AG04449 (cell line): ENCODE measurements at regions of chr4 and their contacts with region 1.

Region 1: GRCh38 chr4:1167247-1167949 is 5.0 kb downstream of the SPON2 start:
- DNase-seq: peak; percentile 21
- H3K4me3 ChIP-seq: peak overlapping the region; percentile 70
- CTCF ChIP-seq: peak; percentile 94

Region 2: DNA sequence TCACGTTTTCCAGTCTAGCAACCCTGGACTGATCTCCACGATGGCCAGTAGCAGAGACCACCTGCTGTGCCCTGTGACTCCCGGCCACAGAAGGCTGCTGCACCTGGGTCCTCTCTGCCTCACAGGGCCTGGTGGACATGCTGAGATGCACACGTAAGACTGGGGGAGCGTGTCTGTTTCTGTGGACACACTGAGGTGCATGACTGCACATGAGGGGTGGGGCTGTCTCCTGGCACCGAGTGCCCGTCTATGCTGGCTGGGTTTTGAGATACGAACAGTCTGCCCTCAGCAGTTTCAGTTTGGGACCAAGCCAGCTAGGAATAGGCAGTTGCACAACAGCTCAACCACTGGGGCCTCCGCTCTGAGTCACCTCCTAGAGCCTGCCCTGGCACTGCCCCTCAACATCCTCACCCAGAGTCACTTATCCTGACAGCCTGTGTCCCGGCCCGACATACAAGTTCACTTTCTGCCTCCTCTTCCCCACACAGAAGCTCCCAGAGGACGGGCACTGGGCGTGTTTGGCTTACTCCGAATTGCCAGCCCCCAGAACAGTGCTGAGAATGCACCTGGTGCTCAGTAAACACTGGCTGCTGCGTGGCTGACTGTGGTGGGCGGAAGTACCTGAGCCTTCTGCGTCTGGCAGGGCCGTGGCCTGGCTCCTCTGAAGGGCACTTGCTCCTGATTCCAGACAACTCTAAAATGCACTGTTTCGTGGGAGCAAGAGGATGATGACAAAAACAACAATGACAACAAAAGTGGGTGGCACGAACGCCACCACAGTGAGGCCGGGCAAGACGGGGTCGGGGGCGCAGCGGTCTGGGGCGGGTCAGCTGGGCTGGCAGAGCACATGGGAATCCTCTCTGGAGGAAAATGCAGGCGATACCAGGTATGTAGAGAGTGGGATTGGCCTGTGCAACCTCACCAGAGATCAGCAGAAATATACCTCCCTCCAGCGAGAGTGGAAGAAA is 84.9 kb before region 1 on chr4:
- CTCF ChIA-PET with region 1: no interaction called
- POLR2A ChIA-PET with region 1: no interaction called
- DNase-seq: no peak
- H3K4me3 ChIP-seq: no peak overlapping the region
- CTCF ChIP-seq: no peak

Region 3: DNA sequence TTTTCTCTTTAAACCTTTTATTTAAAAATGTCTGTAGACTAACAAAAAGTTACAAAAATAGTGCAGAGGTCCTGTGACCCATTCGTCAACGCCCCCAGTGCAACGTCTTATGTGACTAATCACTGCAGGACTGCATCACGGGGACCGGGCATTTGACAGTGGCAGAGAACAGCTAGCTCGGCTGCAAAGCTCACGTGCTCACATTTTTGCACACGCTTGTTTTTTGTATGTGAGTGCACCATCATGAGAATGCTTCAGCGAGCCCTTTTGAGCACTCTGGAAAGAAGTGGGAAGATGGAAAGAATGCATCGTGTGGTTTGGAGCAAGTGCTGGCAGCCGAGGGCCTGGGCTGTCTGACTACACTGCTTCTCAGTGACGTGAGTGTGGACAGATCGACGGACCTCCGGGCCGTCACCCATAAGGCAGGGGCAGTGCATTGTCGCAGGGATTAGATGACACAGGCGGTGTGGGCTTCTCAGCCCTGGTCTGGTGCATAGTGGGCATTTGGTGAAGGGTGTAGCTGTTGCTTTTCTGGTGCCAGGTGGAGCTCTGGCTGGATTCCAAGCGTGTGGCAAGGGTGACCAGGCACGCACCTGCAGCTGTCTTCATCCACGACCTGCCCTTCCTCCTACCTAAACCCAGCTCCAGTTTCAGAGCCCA is 12.7 kb before region 1 on chr4:
- CTCF ChIA-PET with region 1: interaction called, 27 read pairs
- POLR2A ChIA-PET with region 1: no interaction called
- DNase-seq: no peak
- H3K4me3 ChIP-seq: no peak overlapping the region
- CTCF ChIP-seq: no peak

Region 4: GRCh38 chr4:1183985-1184773 is 16.8 kb after region 1 on chr4:
- CTCF ChIA-PET with region 1: interaction called, 29 read pairs
- POLR2A ChIA-PET with region 1: no interaction called
- DNase-seq: no peak
- H3K4me3 ChIP-seq: no peak overlapping the region
- CTCF ChIP-seq: no peak

Region 5: DNA sequence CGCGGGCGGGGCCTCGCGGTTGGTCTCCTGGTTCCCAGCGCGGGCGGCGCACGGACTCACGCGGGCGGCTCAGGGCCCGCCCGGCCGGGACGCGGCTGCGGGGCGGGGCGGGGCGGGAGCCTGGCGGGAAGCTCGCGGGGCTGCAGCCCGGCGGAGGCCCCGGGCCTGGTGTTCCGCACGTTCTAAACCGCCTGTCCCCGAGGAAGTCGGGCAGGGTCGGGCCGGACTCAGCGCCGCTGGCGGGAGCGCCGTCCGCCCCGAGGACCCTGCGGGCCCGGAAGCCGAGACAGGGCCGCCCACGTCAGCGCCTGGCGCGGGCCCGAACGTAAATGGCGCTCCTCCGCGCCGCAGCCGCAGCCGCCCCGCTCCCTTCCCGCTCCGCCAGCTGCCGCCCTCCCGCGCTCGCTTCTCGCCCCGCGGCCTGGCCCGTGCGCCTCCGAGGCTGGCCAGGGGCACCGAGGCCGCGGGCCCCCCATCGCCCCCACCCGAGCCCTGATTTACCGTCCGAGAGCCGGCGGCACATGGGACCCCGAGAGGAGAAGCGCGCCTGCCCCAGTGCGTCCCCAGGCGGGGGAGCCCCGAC is 81.8 kb after region 1 on chr4:
- CTCF ChIA-PET with region 1: interaction called, 11 read pairs
- POLR2A ChIA-PET with region 1: no interaction called
- DNase-seq: no peak
- H3K4me3 ChIP-seq: peak overlapping the region; percentile 58
- CTCF ChIP-seq: no peak

Region 6: GRCh38 chr4:1289207-1290164 is 122.1 kb after region 1 on chr4 and contains the start of gene MAEA:
- CTCF ChIA-PET with region 1: interaction called, 18 read pairs
- POLR2A ChIA-PET with region 1: no interaction called
- DNase-seq: peak; percentile 63
- H3K4me3 ChIP-seq: peak within 1 kb of the TSS; percentile 79
- CTCF ChIP-seq: no peak

Region 7: DNA sequence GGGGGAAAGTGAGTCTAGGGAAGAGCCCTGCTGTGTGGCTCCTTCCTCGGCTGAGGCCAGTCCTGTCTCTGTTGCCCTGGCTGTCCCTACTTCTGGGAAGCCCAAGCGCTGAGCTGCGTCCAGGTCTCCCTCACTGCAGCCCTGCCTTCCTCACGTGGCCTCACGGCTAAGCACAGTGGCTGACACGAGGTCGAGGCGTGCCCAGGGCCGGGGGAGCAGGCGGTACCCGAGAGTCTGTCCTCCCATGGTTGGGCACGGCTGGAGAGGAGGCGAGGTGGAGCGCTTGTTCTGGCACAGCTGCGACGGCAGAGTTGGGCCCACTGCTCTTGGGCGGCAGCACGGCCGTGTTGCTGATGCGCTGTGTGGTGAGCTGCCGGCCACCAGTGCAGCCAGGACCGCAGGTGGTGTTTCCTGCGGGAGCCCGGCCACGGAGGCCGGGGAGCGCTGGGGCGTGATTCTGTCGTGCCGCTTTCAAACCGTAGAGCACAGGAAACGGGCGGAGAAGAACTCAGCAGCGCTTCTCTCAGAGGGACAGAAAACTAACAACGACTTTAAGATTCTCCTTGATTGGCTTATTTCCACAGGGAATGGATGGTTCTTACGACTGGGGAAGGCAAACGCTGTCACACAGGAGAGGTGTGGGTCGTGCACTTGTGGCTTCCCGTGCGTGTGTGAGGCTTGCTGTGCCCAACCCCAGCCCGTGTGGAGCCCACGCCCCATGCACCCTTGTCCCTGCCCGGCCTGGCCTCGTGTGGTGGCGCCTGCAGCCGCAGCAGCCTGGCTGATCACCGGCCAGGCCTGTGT is 143.6 kb after region 1 on chr4:
- CTCF ChIA-PET with region 1: no interaction called
- POLR2A ChIA-PET with region 1: no interaction called
- DNase-seq: no peak
- H3K4me3 ChIP-seq: no peak overlapping the region
- CTCF ChIP-seq: no peak